Caco-2 (cell line): ENCODE measurements at regions of chr19 and their contacts with region 1.

Region 1: DNA sequence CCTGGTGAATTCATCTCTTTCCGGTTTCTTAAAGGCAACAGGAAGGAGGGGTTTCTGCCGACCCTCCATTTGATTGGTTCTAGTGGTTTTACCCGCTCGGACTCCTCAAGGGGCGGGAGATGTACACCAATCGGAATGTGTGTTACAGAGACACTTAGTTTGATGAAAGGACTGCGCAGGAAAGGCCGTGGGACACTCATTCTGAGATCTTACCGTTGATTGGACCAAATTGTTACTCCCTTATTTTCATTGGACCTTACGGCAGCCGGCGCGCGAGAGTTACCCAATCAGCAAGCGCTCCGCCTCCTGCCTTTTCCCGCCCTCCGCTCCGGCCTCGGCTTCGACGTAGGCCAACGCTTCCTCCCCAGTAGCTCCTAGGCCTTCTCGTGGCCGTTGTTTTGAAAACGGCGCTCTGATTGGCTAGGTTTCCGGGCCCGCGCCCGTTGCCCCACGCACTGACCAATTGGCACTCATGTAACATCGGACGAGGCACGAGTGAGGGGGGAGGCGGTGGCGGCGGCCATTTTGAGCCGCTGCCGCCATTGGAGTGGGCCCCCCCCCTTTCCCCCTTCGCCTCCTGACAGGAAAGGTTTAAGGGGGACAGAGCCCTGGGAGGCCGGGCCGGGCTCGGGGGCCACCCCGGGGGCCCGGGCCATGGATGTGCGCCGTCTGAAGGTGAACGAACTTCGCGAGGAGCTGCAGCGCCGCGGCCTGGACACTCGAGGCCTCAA is at the start of gene HNRNPUL1:
- DNase-seq: peak; percentile 99 to 100
- H3K4me3 ChIP-seq: peak within 1 kb of the TSS; percentile 86
- H3K4me3 Mint-ChIP-seq: peak within 1 kb of the TSS; percentile 83
- H3K27ac Mint-ChIP-seq: peak within 1 kb of the TSS; percentile 87
- H3K4me1 ChIP-seq: peaks cover 11% of the 10 kb centered on the region
- H3K4me1 Mint-ChIP-seq: peaks cover 30% of the 10 kb centered on the region
- H3K27me3 ChIP-seq: no peaks in the 10 kb centered on the region
- H3K27me3 Mint-ChIP-seq: no peaks in the 10 kb centered on the region
- CTCF ChIP-seq: peak; percentile 20 to 46
- total RNA-seq, gene HNRNPUL1: 322 and 324 TPM in 2 replicates

Region 2: GRCh38 chr19:40662921-40663694 is 600.9 kb before region 1 on chr19:
- CTCF ChIA-PET with region 1: interaction called, 4 read pairs
- POLR2A ChIA-PET with region 1: no interaction called
- intact Hi-C with region 1: loop called (anchors 2 kb)
- DNase-seq: peak; percentile 88 to 95
- H3K4me3 ChIP-seq: peak overlapping the region; percentile 86
- H3K4me3 Mint-ChIP-seq: peak overlapping the region; percentile 82
- H3K27ac Mint-ChIP-seq: peak overlapping the region; percentile 68
- H3K4me1 ChIP-seq: no peaks in the 10 kb centered on the region
- H3K4me1 Mint-ChIP-seq: no peaks in the 10 kb centered on the region
- H3K27me3 ChIP-seq: no peaks in the 10 kb centered on the region
- H3K27me3 Mint-ChIP-seq: no peaks in the 10 kb centered on the region
- CTCF ChIP-seq: peak; percentile 94 to 98

Region 3: GRCh38 chr19:40798223-40798996 is 465.6 kb before region 1 on chr19:
- CTCF ChIA-PET with region 1: no interaction called
- POLR2A ChIA-PET with region 1: no interaction called
- intact Hi-C with region 1: loop called (anchors 2 kb)
- DNase-seq: peak; percentile 100
- H3K4me3 ChIP-seq: peak overlapping the region; percentile 50
- H3K4me3 Mint-ChIP-seq: peak overlapping the region; percentile 100
- H3K27ac Mint-ChIP-seq: peak overlapping the region; percentile 96
- H3K4me1 ChIP-seq: peaks cover 15% of the 10 kb centered on the region
- H3K4me1 Mint-ChIP-seq: peaks cover 10% of the 10 kb centered on the region
- H3K27me3 ChIP-seq: no peaks in the 10 kb centered on the region
- H3K27me3 Mint-ChIP-seq: no peaks in the 10 kb centered on the region
- CTCF ChIP-seq: peak; percentile 57 to 63

Region 4: DNA sequence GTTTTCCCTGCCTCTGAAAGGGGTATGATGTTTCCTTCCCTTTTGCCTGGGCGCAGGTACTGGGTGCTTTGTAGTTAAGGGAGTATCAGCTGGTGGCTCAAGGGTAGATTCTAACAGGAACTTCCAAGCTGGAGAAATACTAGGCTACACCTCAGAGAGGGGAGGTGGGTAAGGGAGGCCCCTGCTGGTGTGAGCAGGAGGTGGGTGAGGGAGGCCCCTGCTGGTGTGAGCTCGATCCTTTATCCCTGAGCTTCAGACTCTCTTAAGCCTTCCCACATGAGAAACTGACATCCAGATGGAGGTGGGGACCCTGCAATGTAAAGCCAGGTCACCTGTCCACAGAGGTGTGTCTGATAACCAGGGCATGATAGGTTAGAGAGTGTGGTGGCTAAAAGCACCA is 240.8 kb before region 1 on chr19:
- CTCF ChIA-PET with region 1: no interaction called
- POLR2A ChIA-PET with region 1: no interaction called
- intact Hi-C with region 1: no loop called
- DNase-seq: peak in 1 of 2 experiments; percentile 39
- H3K4me3 ChIP-seq: no peak overlapping the region
- H3K4me3 Mint-ChIP-seq: no peak overlapping the region
- H3K27ac Mint-ChIP-seq: no peak overlapping the region
- H3K4me1 ChIP-seq: no peaks in the 10 kb centered on the region
- H3K4me1 Mint-ChIP-seq: no peaks in the 10 kb centered on the region
- H3K27me3 ChIP-seq: no peaks in the 10 kb centered on the region
- H3K27me3 Mint-ChIP-seq: peaks cover 4% of the 10 kb centered on the region
- CTCF ChIP-seq: peak in 1 of 2 experiments; percentile 53

Region 5: GRCh38 chr19:41144403-41144802 is 119.6 kb before region 1 on chr19:
- CTCF ChIA-PET with region 1: no interaction called
- POLR2A ChIA-PET with region 1: no interaction called
- intact Hi-C with region 1: no loop called
- DNase-seq: peak; percentile 82
- H3K4me3 ChIP-seq: no peak overlapping the region
- H3K4me3 Mint-ChIP-seq: no peak overlapping the region
- H3K27ac Mint-ChIP-seq: no peak overlapping the region
- H3K4me1 ChIP-seq: no peaks in the 10 kb centered on the region
- H3K4me1 Mint-ChIP-seq: no peaks in the 10 kb centered on the region
- H3K27me3 ChIP-seq: no peaks in the 10 kb centered on the region
- H3K27me3 Mint-ChIP-seq: no peaks in the 10 kb centered on the region
- CTCF ChIP-seq: peak; percentile 75 to 77

Region 6: DNA sequence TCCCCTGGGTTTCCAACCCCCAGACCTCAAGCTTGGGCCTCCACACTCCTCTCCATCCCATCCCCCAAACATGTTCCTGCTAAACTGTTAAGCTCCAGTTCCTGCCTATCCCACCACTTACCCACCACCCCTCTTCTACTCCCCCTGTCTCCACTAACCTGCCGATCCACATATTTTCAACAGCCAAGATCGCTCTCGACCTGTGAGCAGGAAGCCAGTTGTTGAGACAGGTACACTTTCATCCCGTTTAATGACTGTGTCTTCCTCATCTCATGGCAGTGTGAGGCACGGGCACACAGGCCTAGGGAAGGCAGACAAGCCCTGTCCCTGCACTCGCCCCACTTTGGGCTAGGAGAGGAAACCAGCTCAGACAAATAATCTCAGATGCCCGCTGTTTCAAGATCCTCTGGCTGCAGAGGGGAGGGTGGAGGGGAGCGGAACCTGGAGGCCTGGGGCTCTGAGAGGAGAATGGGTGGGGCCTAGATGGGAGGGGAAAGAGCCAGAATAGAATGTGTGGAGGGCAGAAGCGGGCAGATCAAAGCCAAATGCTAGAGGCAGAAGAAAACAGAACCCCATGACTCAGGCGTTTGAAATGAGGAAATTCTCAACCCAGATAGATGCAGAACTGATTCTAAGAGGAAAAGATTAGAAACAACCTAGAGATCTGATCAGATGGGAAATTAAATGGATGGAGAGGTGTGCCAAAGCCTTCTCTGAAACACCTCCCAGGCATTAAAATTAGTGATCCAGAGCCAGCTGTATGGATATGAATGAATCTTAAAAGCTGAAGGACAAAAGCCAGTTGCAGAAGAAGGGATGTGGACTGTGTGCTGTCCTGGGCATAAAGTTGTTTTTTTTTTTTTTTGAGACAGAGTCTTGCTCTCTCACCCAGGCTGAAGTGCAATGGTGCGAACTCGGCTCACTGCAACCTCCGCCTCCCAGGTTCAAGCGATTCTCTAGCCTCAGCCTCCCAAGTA is 87.9 kb before region 1 on chr19:
- CTCF ChIA-PET with region 1: interaction called, 6 read pairs
- POLR2A ChIA-PET with region 1: interaction called, 9 read pairs
- intact Hi-C with region 1: loop called (anchors 1 kb)
- DNase-seq: peak; percentile 96 to 97
- H3K4me3 ChIP-seq: peak overlapping the region; percentile 39
- H3K4me3 Mint-ChIP-seq: peak overlapping the region; percentile 87
- H3K27ac Mint-ChIP-seq: peak overlapping the region; percentile 96
- H3K4me1 ChIP-seq: peaks cover 36% of the 10 kb centered on the region
- H3K4me1 Mint-ChIP-seq: peaks cover 40% of the 10 kb centered on the region
- H3K27me3 ChIP-seq: no peaks in the 10 kb centered on the region
- H3K27me3 Mint-ChIP-seq: no peaks in the 10 kb centered on the region
- CTCF ChIP-seq: no peak

Region 7: DNA sequence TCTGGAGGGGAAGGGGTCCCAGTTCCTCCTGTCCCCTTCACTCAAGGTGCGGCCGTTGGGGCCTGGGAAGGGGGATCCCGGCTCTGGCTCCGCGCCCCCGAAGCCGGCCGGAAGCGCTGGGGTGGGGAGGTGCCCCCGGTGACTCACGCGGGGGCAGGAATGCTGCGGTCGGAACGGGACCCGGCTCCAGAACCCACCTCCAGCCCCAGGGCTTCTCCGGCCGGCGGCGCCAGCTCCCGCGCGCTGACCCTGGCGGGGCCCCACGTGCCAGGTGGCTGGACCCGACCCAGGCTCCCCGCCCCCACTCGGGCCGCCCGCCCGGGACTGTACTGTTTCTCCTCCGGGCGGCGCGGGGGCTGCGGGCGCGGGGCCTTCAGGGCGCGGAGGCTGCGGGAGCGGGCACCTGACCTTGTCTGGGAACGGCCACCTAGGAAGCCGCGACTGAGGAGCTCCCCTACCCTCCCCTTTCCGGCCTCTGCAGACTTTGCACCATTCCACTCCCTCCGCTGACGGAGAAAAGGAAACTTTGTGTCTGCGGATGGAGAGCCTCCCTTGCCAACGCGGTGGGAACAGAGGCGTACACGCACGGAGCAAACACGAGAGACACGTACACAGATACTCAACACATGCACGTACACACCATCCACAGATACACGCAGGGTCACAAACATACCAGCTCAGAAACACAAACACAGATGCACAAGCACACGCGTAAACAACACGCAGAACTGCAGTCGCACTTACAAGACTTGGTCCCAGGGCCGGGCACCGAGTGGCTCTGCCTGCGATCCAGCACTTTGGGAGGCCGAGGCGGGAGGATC is 37.8 kb before region 1 on chr19:
- CTCF ChIA-PET with region 1: interaction called, 14 read pairs
- POLR2A ChIA-PET with region 1: interaction called, 5 read pairs
- intact Hi-C with region 1: loop called (anchors 1 kb)
- DNase-seq: peak; percentile 82 to 85
- H3K4me3 ChIP-seq: peak overlapping the region; percentile 62
- H3K4me3 Mint-ChIP-seq: peak overlapping the region; percentile 85
- H3K27ac Mint-ChIP-seq: peak overlapping the region; percentile 81
- H3K4me1 ChIP-seq: 0 out of 2 replicates have a peak, but pooled peaks cover 15% of the 10 kb centered on the region
- H3K4me1 Mint-ChIP-seq: peaks cover 19% of the 10 kb centered on the region
- H3K27me3 ChIP-seq: no peaks in the 10 kb centered on the region
- H3K27me3 Mint-ChIP-seq: no peaks in the 10 kb centered on the region
- CTCF ChIP-seq: peak in 1 of 2 experiments; percentile 10